ENCODE measurements at regions of chr16 and their contacts with region 1.

Region 1: DNA sequence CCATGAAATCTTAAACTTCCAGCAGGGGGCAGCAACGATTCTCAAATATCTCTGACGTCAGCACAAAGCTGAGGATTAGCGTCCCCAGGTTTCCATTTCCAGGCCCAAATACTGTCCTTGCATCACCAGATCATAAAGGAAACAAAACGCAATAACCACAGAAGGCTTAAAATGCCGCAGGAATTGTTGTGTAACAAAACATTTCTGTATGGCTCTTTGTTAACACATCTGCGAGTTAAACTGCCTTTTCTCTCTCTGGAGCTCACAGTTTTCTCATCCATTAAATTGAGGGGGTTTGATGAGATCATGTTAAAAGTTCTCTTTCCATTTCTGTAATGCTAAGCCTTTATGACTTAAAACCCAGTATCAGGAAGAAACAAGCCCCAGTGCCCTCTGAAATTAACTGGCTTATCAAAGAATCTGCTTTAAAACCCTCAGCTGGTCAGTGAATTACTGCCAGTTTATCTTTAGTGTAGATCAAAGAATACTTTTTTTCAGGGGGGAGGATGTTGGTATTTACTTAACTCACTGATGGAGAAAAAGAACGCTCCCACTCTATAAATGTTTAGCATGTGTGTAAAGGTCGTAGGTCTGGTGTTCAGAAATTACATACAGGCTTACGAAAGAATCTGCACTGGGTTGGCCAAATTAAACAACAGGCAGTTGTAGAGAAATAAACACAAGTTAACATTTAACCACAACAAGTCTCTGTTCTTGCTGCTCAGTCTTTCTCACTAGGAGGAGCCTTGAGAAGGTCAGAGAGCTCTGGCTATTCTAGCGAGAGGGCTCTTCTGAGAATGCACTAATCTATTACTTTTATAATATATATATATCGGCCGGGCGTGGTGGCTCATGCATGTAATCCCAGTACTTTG is 10.6 kb upstream of the TERF2 start:
- DNase-seq: peak; percentile 40 to 53
- ATAC-seq: peak; percentile 57 to 67
- H3K4me3 ChIP-seq: no peak overlapping the region
- H3K27ac ChIP-seq: peak overlapping the region; percentile 60 to 77 (median 62)
- H3K4me1 ChIP-seq: peaks cover 16% of the 10 kb centered on the region in 2 donors
- H3K27me3 ChIP-seq: no peaks in the 10 kb centered on the region
- CTCF ChIP-seq: peak in 4 of 5 experiments; percentile 70 to 79 (median 76)
- POLR2A ChIP-seq: no peak

Region 2: DNA sequence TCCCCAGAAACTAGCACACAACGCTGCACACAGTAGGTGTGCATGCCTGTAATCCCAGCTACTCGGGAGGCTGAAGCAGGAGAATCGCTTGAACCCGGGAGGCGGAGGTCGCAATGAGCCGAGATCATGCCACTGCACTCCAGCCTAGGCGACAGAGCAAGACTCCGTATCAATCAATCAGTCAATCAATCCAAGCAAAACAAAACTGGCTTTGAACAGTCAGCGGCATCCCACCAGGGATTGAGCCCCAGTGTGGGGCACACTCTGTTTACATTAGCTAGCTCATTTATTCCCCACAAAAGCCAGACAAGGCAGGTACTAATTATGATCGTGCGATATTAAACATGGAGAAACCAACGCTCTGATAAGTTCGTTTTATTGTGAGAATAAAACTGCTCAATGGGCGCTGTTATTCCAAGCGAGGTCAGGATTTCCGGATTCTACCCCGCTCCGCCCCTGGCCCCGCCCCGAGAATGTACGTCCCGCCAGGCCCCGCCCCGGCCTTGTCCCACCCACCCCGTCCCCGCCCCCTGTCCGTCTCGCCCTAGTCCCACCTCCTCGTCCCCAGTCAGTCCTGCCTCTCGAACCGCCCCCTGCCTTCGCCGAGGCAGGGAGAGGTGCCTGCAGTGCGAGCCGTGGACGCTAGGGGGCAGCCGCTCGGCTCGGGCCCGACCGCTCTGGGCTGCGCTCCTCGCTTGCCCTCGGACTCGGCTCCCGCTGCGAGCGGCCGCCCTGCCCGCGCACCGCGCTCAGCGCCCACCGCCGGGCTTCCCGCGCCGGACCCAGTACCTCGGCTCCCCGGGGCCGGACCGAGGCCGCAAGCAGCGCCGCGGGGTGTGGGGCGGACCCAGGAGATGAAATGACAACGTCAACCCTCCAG is 85.5 kb before region 1 on chr16 and contains the start of gene VPS4A:
- in situ Hi-C with region 1: no loop called
- intact Hi-C with region 1: no loop called
- DNase-seq: peak; percentile 93 to 95
- ATAC-seq: peak; percentile 91 to 96
- H3K4me3 ChIP-seq: peak within 1 kb of the TSS; percentile 74 to 97 (median 76)
- H3K27ac ChIP-seq: peak within 1 kb of the TSS; percentile 81 to 95 (median 90)
- H3K4me1 ChIP-seq: peaks cover 15 to 19% of the 10 kb centered on the region in 2 donors
- H3K27me3 ChIP-seq: no peaks in the 10 kb centered on the region
- CTCF ChIP-seq: peak; percentile 90 to 99 (median 94)
- POLR2A ChIP-seq: peak; percentile 62 to 87
- total RNA-seq, gene VPS4A: 53.3 to 112 (median 70.1) TPM

Region 3: DNA sequence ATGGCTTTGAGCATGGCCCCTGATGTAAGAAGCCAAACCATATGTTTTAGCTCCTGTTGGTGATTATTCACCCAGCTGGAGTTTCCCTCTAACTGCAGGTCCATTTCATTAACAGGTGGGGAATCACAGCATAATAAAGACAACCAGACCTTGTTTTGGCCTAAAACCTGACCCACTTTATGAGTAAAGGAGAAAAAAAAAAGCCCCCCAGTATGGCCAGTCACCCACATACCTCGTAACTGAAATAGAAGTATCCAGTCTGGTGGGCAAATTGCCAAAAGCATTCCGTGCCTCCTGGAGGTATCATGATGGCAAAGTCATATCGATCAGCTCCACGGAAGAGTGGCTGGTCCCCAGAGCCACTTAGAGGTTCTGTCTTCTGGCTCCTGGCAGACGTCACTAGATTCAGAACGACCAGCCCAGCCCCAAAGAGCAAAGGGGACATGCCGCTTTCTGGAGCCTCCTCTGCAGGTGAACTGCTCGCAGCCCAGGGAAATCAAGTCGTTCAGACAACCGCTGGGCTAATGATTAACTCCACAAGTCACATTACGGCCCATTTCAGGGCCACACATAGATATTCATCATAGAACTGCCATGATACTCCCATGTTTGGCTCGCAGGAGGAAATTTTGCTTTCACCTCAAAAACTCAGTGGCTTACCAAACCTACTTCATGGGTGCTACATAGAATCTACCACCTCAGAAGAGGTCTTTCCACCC is 45.0 kb before region 1 on chr16 and contains the start of gene TMED6:
- in situ Hi-C with region 1: no loop called
- intact Hi-C with region 1: no loop called
- DNase-seq: no peak
- ATAC-seq: no peak
- H3K4me3 ChIP-seq: no peak within 1 kb of the TSS
- H3K27ac ChIP-seq: no peak within 1 kb of the TSS
- H3K4me1 ChIP-seq: peaks cover 3 to 4% of the 10 kb centered on the region in 2 donors
- H3K27me3 ChIP-seq: no peaks in the 10 kb centered on the region
- CTCF ChIP-seq: no peak
- POLR2A ChIP-seq: no peak
- total RNA-seq, gene TMED6: 1.3 TPM in 1 of 4 donors, not detected in the others

Region 4: GRCh38 chr16:69482410-69482991 is 86.1 kb after region 1 on chr16:
- in situ Hi-C with region 1: loop called in 1 of 4 experiments (anchors 5 kb)
- intact Hi-C with region 1: loop called (anchors 2 kb)
- DNase-seq: peak; percentile 20 to 40
- ATAC-seq: peak; percentile 62 to 77
- H3K4me3 ChIP-seq: peak overlapping the region; percentile 19 to 44 (median 37)
- H3K27ac ChIP-seq: peak overlapping the region; percentile 76 to 89 (median 84)
- H3K4me1 ChIP-seq: peaks cover 17% of the 10 kb centered on the region in 2 donors
- H3K27me3 ChIP-seq: no peaks in the 10 kb centered on the region
- CTCF ChIP-seq: no peak
- POLR2A ChIP-seq: no peak

Region 5: DNA sequence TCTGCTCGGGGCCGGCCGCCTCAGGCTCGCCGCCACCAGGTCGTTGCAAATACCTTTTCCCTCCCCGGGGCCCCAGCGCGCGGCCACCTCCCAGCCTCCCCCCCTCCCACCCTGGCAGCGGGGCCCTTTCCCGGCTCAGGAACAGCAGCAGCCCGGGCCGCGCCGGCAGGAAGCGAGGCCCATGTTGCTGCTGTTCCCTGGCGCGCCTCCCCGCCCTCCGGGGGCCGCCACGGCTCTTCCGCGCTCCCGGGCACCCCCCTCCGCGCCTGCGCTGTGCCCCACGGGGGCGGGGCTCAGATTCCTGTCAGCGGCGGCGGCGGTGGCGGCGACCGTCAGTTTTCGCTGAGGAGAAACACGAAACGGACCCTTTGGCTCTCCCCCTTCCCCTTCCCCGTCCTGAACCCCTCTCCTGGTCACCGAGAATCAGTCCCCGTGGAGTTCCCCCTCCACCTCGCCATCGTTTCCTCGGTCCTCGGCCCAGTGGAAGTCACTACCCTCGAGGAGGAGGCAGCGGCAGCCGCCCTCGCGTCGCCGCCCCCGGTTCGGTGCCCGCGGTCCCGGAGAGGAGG is 169.3 kb after region 1 on chr16 and contains the start of gene NFAT5:
- in situ Hi-C with region 1: loop called in 1 of 4 experiments (anchors 10 kb)
- intact Hi-C with region 1: no loop called
- DNase-seq: peak; percentile 74 to 77
- ATAC-seq: peak; percentile 79 to 82
- H3K4me3 ChIP-seq: peak within 1 kb of the TSS; percentile 75 to 99 (median 94)
- H3K27ac ChIP-seq: peak within 1 kb of the TSS; percentile 98 to 100 (median 100)
- H3K4me1 ChIP-seq: peaks cover 38 to 43% of the 10 kb centered on the region in 2 donors
- H3K27me3 ChIP-seq: no peaks in the 10 kb centered on the region
- CTCF ChIP-seq: peak in 1 of 5 experiments; percentile 11
- POLR2A ChIP-seq: peak; percentile 95 to 96
- total RNA-seq, gene NFAT5: 14.4 to 34.2 (median 18.4) TPM

Region 6: DNA sequence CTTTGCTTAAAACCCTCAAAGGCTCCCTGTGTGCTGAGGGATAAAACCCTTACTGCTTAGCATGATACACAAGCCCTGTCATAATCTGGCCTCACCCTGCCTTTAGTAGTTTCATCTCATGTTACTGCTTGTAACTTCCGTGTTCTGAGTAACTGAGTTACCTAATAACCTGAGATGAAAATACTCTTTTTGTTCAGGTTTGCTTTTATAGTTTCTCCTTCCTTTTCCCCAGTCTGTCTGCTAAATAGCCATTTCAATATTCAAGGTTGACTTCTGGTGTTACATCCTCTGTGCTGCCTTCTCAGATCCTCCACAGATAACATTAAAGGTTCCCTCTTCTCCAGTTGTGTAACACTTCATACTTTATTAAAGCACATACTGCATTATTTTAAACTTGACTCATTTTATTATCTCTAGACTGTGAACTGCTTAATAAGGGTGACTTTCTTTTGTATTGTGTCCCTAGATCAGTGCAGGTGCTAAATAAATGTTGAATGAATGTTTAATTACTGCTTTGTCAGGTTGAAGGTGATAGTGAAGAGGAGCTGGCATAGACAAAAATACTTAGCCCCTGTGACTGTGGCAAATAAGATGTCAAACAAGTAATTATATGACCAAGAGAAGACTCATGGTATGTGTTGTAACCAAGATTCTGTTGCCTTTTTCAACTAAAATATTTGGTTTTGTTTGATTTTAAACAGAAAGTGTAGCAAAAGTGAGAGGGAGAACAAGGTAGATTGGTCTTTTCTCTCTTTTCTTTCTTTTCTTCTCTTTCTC is 217.1 kb after region 1 on chr16:
- in situ Hi-C with region 1: no loop called
- intact Hi-C with region 1: loop called (anchors 5 kb)
- DNase-seq: peak; percentile 42 to 46
- ATAC-seq: peak; percentile 89 to 97
- H3K4me3 ChIP-seq: peak overlapping the region in 1 of 4 donors; percentile 7
- H3K27ac ChIP-seq: peak overlapping the region; percentile 82 to 91 (median 85)
- H3K4me1 ChIP-seq: peaks cover 66 to 85% of the 10 kb centered on the region in 2 donors
- H3K27me3 ChIP-seq: no peaks in the 10 kb centered on the region
- CTCF ChIP-seq: no peak
- POLR2A ChIP-seq: no peak

Region 7: DNA sequence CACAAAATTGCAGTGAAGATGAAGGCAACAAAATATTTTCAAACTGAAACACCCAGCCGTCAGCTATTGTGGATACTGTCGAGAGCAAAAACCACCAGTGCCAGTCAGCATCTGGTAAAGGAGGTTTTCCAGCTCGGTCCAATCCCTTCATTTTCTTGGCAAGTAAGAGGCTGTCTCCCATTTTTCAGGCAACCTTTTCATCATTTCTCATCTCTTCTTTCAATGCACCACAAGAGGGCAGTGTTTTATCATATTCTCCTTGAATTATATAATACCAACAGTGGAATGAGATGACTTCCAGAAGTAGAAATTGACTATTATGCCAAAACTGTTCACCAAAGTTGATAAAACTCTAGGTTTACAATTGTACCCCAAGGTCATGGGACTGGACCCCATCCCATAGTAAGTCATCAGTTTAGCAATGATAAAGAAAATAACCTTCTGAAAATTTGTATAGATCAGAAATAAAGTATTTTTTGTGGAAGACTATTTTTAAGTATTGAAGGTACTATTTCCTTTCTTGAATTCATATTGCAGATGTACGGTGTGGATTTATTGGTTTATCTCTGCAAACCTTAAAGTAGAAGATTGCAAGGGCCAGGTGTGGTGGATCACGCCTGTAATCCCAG is 313.1 kb after region 1 on chr16:
- in situ Hi-C with region 1: no loop called
- intact Hi-C with region 1: loop called (anchors 5 kb)
- DNase-seq: no peak
- ATAC-seq: peak in 1 of 2 donors; percentile 74
- H3K4me3 ChIP-seq: no peak overlapping the region
- H3K27ac ChIP-seq: no peak overlapping the region
- H3K4me1 ChIP-seq: no peaks in the 10 kb centered on the region
- H3K27me3 ChIP-seq: no peaks in the 10 kb centered on the region
- CTCF ChIP-seq: peak; percentile 59 to 73 (median 70)
- POLR2A ChIP-seq: no peak

Region 8: DNA sequence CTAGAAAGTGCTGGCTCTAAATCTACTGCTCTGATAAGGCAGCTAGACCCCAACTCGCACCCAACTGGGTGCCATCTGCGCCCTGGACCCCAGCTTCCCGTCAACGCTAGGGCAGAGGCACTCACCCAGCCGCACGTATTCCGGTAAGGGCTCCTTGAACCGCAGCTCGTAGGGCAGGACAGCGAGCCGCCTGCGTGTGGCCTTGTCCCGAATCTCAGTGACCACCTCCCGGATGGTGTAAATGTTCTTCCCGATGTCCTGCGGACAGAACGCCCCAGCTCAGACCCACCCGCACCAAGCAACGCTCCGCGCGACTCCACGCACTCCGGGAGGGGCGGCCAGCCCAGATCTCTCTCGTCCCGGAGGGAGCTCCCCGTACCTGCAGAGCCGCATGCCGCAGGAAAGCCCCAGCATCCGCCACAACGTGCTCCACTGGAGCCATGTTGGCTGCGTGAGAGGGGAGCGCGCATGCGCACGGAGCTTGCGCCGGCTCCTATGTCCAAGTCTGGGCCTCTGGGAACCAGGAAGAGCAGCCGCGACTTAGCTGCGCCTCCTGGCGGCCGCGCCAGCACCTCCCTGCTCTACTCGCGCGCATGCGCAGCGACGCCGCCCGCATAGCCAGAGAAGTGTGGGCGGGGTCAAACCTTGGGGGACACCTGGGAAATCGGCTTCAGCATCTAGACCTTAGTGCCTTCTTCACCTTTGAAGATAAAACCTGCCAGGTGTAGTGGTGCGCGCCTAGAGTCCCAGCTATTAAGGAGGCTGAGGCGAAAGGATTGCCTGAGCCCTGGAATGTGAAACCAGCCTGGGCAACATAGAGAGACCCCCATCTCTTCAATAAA is 358.3 kb after region 1 on chr16 and contains the start of gene NOB1:
- in situ Hi-C with region 1: loop called (anchors 5 to 25 kb)
- intact Hi-C with region 1: loop called (anchors 1 kb)
- DNase-seq: peak; percentile 91 to 94
- ATAC-seq: peak; percentile 96 to 99
- H3K4me3 ChIP-seq: peak within 1 kb of the TSS; percentile 77 to 95 (median 90)
- H3K27ac ChIP-seq: peak within 1 kb of the TSS; percentile 75 to 86 (median 78)
- H3K4me1 ChIP-seq: peaks cover 12 to 16% of the 10 kb centered on the region in 2 donors
- H3K27me3 ChIP-seq: no peaks in the 10 kb centered on the region
- CTCF ChIP-seq: peak; percentile 98 to 99 (median 99)
- POLR2A ChIP-seq: peak in 1 of 2 donors; percentile 44
- total RNA-seq, gene NOB1: 19.2 to 30.9 (median 24.2) TPM

Measured in gastrocnemius medialis (tissue), 4 donors.